ENCODE measurements at regions of chr1 and their contacts with region 1.

Region 1: GRCh38 chr1:156728597-156729462 is at the start of gene ISG20L2:
- DNase-seq: peak; percentile 98
- ATAC-seq: peak; percentile 96 to 97
- total RNA-seq, gene ISG20L2: 15.7 to 18.6 TPM

Region 2: GRCh38 chr1:156689035-156689952 is 39.5 kb before region 1 on chr1:
- intact Hi-C with region 1: loop called (anchors 2 to 5 kb)
- DNase-seq: peak; percentile 80
- ATAC-seq: peak; percentile 92 to 96

Region 3: GRCh38 chr1:156767101-156767878 is 38.5 kb after region 1 on chr1 and contains the start of gene PRCC:
- intact Hi-C with region 1: loop called in 1 of 2 experiments (anchors 5 kb)
- DNase-seq: peak; percentile 97
- ATAC-seq: peak; percentile 96 to 97
- total RNA-seq, gene PRCC: 32.0 to 46.2 TPM

Measured in left cardiac atrium (tissue), 4 donors.